CD8-positive, alpha-beta T cell (primary cell): ENCODE measurements at regions of chr1 and their contacts with region 1.

Region 1: DNA sequence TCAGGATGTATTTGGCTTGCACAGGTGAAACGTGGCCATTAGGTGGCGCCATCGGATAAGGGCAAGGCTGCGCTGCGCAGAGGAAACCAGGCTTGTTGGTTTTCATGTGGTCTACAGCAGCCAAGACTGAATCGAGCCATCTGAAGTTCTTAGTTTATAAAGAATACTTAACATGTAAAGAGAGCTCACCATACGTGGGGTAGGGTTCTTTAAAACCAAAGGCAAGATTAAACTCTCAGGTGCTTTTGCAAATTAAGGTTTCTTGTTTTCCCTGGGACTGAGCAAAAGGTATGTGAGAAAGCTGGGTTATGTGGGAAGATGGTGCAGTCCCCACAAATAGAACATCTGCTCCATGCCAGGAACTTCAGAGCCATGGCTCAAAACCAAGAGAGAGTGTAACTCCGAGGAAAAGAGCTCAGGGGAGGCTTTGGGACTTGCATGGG is 9.3 kb downstream of the MASP2 start:
- DNase-seq: peak; percentile 81 to 94 (median 91)
- ATAC-seq: peak; percentile 100
- H3K4me3 ChIP-seq: no peak overlapping the region
- H3K4me3 Mint-ChIP-seq: no peak overlapping the region
- H3K27ac ChIP-seq: no peak overlapping the region
- H3K27ac Mint-ChIP-seq: no peak overlapping the region
- H3K4me1 ChIP-seq: peaks cover 4% of the 10 kb centered on the region
- H3K4me1 Mint-ChIP-seq: peaks cover 7% of the 10 kb centered on the region
- H3K27me3 ChIP-seq: peaks cover 0 to 3% of the 10 kb centered on the region in 2 experiments
- H3K27me3 Mint-ChIP-seq: peaks cover 6% of the 10 kb centered on the region
- CTCF ChIP-seq: peak; percentile 93

Region 2: GRCh38 chr1:11000526-11000925 is 37.2 kb before region 1 on chr1:
- CTCF ChIA-PET with region 1: no interaction called
- POLR2A ChIA-PET with region 1: no interaction called
- intact Hi-C with region 1: no loop called
- DNase-seq: no peak
- ATAC-seq: no peak
- H3K4me3 ChIP-seq: no peak overlapping the region
- H3K4me3 Mint-ChIP-seq: no peak overlapping the region
- H3K27ac ChIP-seq: no peak overlapping the region
- H3K27ac Mint-ChIP-seq: no peak overlapping the region
- H3K4me1 ChIP-seq: no peaks in the 10 kb centered on the region
- H3K4me1 Mint-ChIP-seq: no peaks in the 10 kb centered on the region
- H3K27me3 ChIP-seq: no peaks in the 10 kb centered on the region
- H3K27me3 Mint-ChIP-seq: no peaks in the 10 kb centered on the region
- CTCF ChIP-seq: no peak

Region 3: GRCh38 chr1:11052839-11053757 is 15.3 kb after region 1 on chr1:
- CTCF ChIA-PET with region 1: interaction called, 54 read pairs
- POLR2A ChIA-PET with region 1: interaction called, 3 read pairs
- intact Hi-C with region 1: no loop called
- DNase-seq: peak in 1 of 9 experiments; percentile 25
- ATAC-seq: no peak
- H3K4me3 ChIP-seq: no peak overlapping the region
- H3K4me3 Mint-ChIP-seq: no peak overlapping the region
- H3K27ac ChIP-seq: no peak overlapping the region
- H3K27ac Mint-ChIP-seq: no peak overlapping the region
- H3K4me1 ChIP-seq: no peaks in the 10 kb centered on the region
- H3K4me1 Mint-ChIP-seq: no peaks in the 10 kb centered on the region
- H3K27me3 ChIP-seq: no peaks in the 10 kb centered on the region
- H3K27me3 Mint-ChIP-seq: no peaks in the 10 kb centered on the region
- CTCF ChIP-seq: no peak

Region 4: GRCh38 chr1:11078631-11079030 is 40.9 kb after region 1 on chr1:
- CTCF ChIA-PET with region 1: interaction called, 15 read pairs
- POLR2A ChIA-PET with region 1: interaction called, 3 read pairs
- intact Hi-C with region 1: no loop called
- DNase-seq: no peak
- ATAC-seq: no peak
- H3K4me3 ChIP-seq: no peak overlapping the region
- H3K4me3 Mint-ChIP-seq: no peak overlapping the region
- H3K27ac ChIP-seq: no peak overlapping the region
- H3K27ac Mint-ChIP-seq: no peak overlapping the region
- H3K4me1 ChIP-seq: no peaks in the 10 kb centered on the region
- H3K4me1 Mint-ChIP-seq: no peaks in the 10 kb centered on the region
- H3K27me3 ChIP-seq: no peaks in the 10 kb centered on the region
- H3K27me3 Mint-ChIP-seq: no peaks in the 10 kb centered on the region
- CTCF ChIP-seq: no peak

Region 5: GRCh38 chr1:11114966-11115365 is 77.2 kb after region 1 on chr1:
- CTCF ChIA-PET with region 1: interaction called, 14 read pairs
- POLR2A ChIA-PET with region 1: no interaction called
- intact Hi-C with region 1: loop called (anchors 5 kb)
- DNase-seq: no peak
- ATAC-seq: no peak
- H3K4me3 ChIP-seq: no peak overlapping the region
- H3K4me3 Mint-ChIP-seq: no peak overlapping the region
- H3K27ac ChIP-seq: no peak overlapping the region
- H3K27ac Mint-ChIP-seq: no peak overlapping the region
- H3K4me1 ChIP-seq: no peaks in the 10 kb centered on the region
- H3K4me1 Mint-ChIP-seq: no peaks in the 10 kb centered on the region
- H3K27me3 ChIP-seq: no peaks in the 10 kb centered on the region
- H3K27me3 Mint-ChIP-seq: no peaks in the 10 kb centered on the region
- CTCF ChIP-seq: no peak

Region 6: DNA sequence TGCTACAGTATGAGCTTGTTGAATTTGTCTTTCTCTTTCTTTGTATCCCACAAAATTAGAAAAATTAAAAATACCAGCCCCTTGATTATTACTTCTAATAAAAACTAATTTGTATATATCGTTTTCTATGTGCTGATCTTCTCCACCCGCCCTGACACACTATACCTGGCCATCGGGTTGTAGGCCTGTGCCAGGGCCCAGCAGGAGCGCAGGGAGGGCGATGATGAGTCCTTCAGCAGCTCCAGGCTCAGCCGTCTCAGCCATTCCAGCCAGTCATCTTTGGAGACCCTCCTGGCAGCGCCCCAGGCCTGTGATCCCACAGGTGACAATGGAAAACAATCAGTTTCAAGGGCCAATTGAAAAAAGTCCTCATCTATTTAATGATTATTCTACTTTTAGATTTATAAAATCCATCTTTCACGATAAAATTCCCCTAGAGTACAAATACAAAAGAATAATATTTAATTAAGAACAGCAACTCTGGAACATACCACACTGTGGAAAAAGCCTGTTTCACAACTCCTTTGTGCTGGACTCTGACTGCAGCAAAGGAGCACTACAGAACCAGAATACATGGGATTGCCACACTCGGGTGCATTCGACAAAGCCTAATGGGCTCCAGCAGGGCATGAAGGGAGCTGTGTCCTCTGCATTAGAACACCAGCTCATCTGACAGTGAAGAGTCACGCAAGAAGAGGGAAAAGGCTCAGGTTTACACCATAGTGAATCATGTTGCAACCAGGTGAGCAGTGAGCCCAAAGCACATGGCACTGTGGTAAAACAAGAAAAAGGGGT is 166.8 kb after region 1 on chr1:
- CTCF ChIA-PET with region 1: interaction called, 11 read pairs
- POLR2A ChIA-PET with region 1: no interaction called
- intact Hi-C with region 1: no loop called
- DNase-seq: no peak
- ATAC-seq: no peak
- H3K4me3 ChIP-seq: no peak overlapping the region
- H3K4me3 Mint-ChIP-seq: no peak overlapping the region
- H3K27ac ChIP-seq: no peak overlapping the region
- H3K27ac Mint-ChIP-seq: no peak overlapping the region
- H3K4me1 ChIP-seq: no peaks in the 10 kb centered on the region
- H3K4me1 Mint-ChIP-seq: no peaks in the 10 kb centered on the region
- H3K27me3 ChIP-seq: no peaks in the 10 kb centered on the region
- H3K27me3 Mint-ChIP-seq: no peaks in the 10 kb centered on the region
- CTCF ChIP-seq: no peak

Region 7: GRCh38 chr1:11248155-11248554 is 210.4 kb after region 1 on chr1:
- CTCF ChIA-PET with region 1: interaction called, 23 read pairs
- POLR2A ChIA-PET with region 1: no interaction called
- intact Hi-C with region 1: loop called in 1 of 2 experiments (anchors 10 kb)
- DNase-seq: no peak
- ATAC-seq: no peak
- H3K4me3 ChIP-seq: no peak overlapping the region
- H3K4me3 Mint-ChIP-seq: no peak overlapping the region
- H3K27ac ChIP-seq: no peak overlapping the region
- H3K27ac Mint-ChIP-seq: peak overlapping the region; percentile 45
- H3K4me1 ChIP-seq: no peaks in the 10 kb centered on the region
- H3K4me1 Mint-ChIP-seq: peaks cover 12% of the 10 kb centered on the region
- H3K27me3 ChIP-seq: no peaks in the 10 kb centered on the region
- H3K27me3 Mint-ChIP-seq: no peaks in the 10 kb centered on the region
- CTCF ChIP-seq: no peak

Region 8: GRCh38 chr1:11719313-11720032 is 681.7 kb after region 1 on chr1:
- CTCF ChIA-PET with region 1: interaction called, 15 read pairs
- POLR2A ChIA-PET with region 1: interaction called, 3 read pairs
- intact Hi-C with region 1: loop called (anchors 1 kb)
- DNase-seq: peak; percentile 73 to 94 (median 90)
- ATAC-seq: peak; percentile 87
- H3K4me3 ChIP-seq: peak overlapping the region; percentile 51 to 66
- H3K4me3 Mint-ChIP-seq: peak overlapping the region; percentile 88
- H3K27ac ChIP-seq: peak overlapping the region; percentile 52 to 74
- H3K27ac Mint-ChIP-seq: peak overlapping the region; percentile 91
- H3K4me1 ChIP-seq: peaks cover 15% of the 10 kb centered on the region
- H3K4me1 Mint-ChIP-seq: peaks cover 13% of the 10 kb centered on the region
- H3K27me3 ChIP-seq: no peaks in the 10 kb centered on the region
- H3K27me3 Mint-ChIP-seq: no peaks in the 10 kb centered on the region
- CTCF ChIP-seq: peak; percentile 96